ENCODE measurements at regions of chr13 and their contacts with region 1.

Region 1: DNA sequence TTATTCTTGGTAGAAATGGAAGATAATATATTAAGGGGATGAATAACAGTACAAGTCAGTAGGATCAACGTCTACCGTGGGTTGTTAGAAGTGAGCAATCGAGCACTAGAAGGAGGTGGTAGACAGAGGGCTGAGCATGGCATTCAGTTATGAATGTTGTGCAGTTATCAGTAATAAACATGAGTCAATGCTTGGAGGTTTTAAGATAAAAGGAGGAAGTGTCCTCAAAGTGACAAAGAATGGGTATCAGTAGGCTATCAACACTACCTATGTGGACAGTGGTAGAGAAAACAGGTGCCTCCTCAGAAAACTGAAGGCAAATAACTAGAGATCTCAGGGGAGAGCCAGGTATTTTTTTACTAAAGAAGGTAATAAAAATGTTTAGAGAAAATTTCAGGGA is 1607.0 kb downstream of the PCDH9 start:
- DNase-seq: no peak
- ATAC-seq: no peak
- H3K4me3 ChIP-seq: no peak overlapping the region
- H3K27ac ChIP-seq: no peak overlapping the region
- H3K4me1 ChIP-seq: no peaks in the 10 kb centered on the region
- H3K27me3 ChIP-seq: no peaks in the 10 kb centered on the region
- CTCF ChIP-seq: no peak

Region 2: GRCh38 chr13:65609350-65609749 is 13.8 kb before region 1 on chr13:
- intact Hi-C with region 1: loop called in 1 of 10 experiments (anchors 2 kb)
- DNase-seq: no peak
- ATAC-seq: no peak
- H3K4me3 ChIP-seq: no peak overlapping the region
- H3K27ac ChIP-seq: no peak overlapping the region
- H3K4me1 ChIP-seq: no peaks in the 10 kb centered on the region
- H3K27me3 ChIP-seq: no peaks in the 10 kb centered on the region
- CTCF ChIP-seq: no peak

Measured in heart right ventricle (tissue), 16 donors.